Right ventricle myocardium inferior (tissue), 1 donor: ENCODE measurements at regions of chr4 and their contacts with region 1.

Region 1: GRCh38 chr4:183876268-183876934 is 28.7 kb upstream of the STOX2 start:
- DNase-seq: peak; percentile 88
- ATAC-seq: peak; percentile 91

Region 2: GRCh38 chr4:183729430-183730328 is 146.7 kb before region 1 on chr4:
- intact Hi-C with region 1: no loop called
- DNase-seq: no peak
- ATAC-seq: no peak

Region 3: DNA sequence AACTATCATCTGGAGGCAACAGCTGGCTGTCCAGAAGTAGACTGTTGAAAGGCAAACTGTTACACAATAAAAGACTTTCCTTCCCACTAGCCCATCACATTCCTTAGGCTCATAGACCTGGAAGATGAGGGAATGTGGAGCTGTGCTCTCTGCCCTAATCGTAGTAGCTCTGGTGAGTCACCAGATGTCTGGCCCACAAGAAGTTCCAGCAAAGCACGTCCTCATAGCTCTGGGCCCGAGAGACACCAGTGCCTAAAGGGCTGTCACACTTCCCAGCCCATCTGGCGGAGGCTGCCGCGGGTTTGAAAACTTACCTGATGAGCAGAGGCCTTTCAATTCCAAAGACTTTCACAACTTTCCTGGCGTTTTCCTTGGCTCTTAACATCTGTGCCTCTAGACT is 53.0 kb before region 1 on chr4:
- intact Hi-C with region 1: no loop called
- DNase-seq: no peak
- ATAC-seq: peak; percentile 89

Region 4: DNA sequence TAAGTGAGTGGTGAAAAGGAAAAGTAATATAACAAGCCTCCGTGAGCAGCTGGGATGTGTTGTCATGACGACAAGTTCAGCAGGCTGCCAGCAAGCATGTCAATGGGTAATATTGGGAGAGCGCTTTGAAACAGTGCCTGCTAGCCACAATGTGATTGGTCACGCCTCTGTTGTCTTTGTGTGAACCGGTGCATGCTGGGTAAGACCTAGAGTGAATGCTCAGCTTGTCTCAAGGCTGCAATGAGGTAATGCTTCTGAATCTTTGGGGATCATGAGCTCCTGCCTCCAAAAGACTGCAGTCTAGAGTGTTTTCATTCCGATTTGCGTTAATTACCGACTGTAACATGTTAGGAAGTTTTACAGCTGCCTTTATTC is 83.6 kb after region 1 on chr4:
- intact Hi-C with region 1: loop called (anchors 5 kb)
- DNase-seq: peak; percentile 66
- ATAC-seq: peak; percentile 91

Region 5: GRCh38 chr4:183987987-183988392 is 111.6 kb after region 1 on chr4:
- intact Hi-C with region 1: loop called (anchors 10 kb)
- DNase-seq: peak; percentile 72
- ATAC-seq: peak; percentile 92